Common myeloid progenitor, CD34-positive (primary cell): ENCODE measurements at regions of chr12 and their contacts with region 1.

Region 1: DNA sequence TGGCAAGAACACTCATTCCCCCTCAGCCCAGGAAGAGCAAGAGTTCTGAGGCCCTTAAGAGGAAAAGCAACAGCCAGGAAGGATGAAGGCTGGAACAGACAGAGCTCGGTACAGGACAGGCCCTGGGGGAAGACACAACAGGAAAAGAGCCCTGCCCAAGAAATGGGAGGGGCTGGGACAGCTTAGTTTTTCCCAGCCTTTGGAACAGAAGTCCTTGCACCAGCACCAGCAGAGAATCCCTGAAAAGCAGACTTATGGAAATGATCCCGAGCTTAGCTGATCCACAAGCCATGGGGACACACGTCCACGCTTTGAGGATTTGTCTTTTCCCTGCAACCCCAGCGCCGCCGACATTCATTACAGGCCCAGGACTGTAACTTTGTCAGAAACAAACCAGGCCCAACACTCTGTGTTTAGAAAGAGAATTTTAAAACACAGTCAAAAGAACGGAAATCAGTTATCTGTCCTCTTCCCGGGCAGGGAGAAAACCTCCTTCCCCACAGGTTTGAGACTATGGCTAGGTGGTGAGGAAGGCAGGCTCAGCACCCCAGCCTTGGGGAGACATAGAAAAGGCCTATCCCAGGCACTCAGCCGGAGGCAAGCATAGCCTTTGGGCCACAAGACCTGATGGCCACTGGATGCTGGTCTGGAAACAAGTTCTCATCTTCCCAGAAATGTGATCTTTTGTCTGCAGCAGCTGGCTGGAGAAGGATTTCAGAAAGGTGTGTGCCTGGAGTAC is 4.0 kb upstream of the AVIL start:
- DNase-seq: no peak
- H3K4me3 ChIP-seq: no peak overlapping the region
- H3K27ac ChIP-seq: no peak overlapping the region
- H3K4me1 ChIP-seq: peaks cover 0 to 2% (median 0%) of the 10 kb centered on the region in 4 experiments
- H3K27me3 ChIP-seq: no peaks in the 10 kb centered on the region

Region 2: GRCh38 chr12:57803319-57803893 is 19.2 kb before region 1 on chr12:
- CTCF ChIA-PET with region 1: interaction called, 39 read pairs
- POLR2A ChIA-PET with region 1: no interaction called
- DNase-seq: peak; percentile 14 to 36 (median 21)
- H3K4me3 ChIP-seq: no peak overlapping the region
- H3K27ac ChIP-seq: no peak overlapping the region
- H3K4me1 ChIP-seq: no peaks in the 10 kb centered on the region
- H3K27me3 ChIP-seq: no peaks in the 10 kb centered on the region